ENCODE measurements at regions of chr1 and their contacts with region 1.

Region 1: GRCh38 chr1:77683160-77684148 is 996 bp upstream of the ZZZ3 start:
- DNase-seq: peak; percentile 92
- H3K4me3 Mint-ChIP-seq: peak overlapping the region; percentile 95
- H3K27ac Mint-ChIP-seq: peak overlapping the region; percentile 95
- H3K4me1 Mint-ChIP-seq: peaks cover 33% of the 10 kb centered on the region
- H3K27me3 Mint-ChIP-seq: no peaks in the 10 kb centered on the region

Region 2: DNA sequence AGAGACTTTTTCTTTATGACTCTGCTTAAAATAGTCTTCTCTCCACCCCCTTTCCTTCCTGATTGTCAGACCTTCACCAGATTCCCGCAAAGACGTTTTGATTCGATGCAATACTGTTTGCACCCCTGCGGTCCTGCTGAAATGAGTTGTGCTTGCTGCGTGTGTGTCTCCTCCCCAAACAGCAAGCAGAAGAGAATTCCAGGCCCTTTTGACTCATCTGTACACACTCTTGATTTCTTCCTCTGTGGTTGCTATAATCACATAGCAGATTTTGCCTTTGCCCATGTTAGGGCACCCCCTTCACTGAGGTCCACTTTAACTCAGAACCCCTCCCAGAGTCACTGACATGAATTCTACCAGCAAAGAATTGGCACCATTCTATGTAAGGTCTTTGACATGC is 137.5 kb before region 1 on chr1:
- CTCF ChIA-PET with region 1: no interaction called
- POLR2A ChIA-PET with region 1: no interaction called
- DNase-seq: no peak
- H3K4me3 Mint-ChIP-seq: no peak overlapping the region
- H3K27ac Mint-ChIP-seq: no peak overlapping the region
- H3K4me1 Mint-ChIP-seq: no peaks in the 10 kb centered on the region
- H3K27me3 Mint-ChIP-seq: no peaks in the 10 kb centered on the region

Region 3: GRCh38 chr1:77672374-77672773 is 11.1 kb before region 1 on chr1:
- CTCF ChIA-PET with region 1: interaction called, 11 read pairs
- POLR2A ChIA-PET with region 1: interaction called, 4 read pairs
- DNase-seq: no peak
- H3K4me3 Mint-ChIP-seq: no peak overlapping the region
- H3K27ac Mint-ChIP-seq: no peak overlapping the region
- H3K4me1 Mint-ChIP-seq: peaks cover 53% of the 10 kb centered on the region
- H3K27me3 Mint-ChIP-seq: no peaks in the 10 kb centered on the region

Region 4: DNA sequence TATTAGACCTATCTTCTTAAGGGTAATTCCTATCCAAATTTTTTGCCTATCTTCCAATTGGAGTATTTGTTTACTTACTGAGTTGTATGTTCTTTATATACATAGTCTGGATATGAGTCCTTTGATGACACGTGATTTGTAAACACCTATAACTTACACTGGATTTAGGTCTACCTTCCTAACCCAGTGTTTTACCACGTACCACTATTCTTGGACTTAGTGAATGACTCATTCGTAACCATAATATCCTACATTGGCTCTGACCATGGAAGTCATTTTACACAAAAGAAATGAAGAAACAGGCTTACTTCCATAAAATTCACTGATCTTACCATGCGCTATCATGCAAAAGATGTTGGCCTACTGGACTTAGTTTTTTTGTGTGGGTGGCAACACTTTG is 22.9 kb after region 1 on chr1:
- CTCF ChIA-PET with region 1: no interaction called
- POLR2A ChIA-PET with region 1: no interaction called
- DNase-seq: no peak
- H3K4me3 Mint-ChIP-seq: no peak overlapping the region
- H3K27ac Mint-ChIP-seq: no peak overlapping the region
- H3K4me1 Mint-ChIP-seq: peaks cover 2% of the 10 kb centered on the region
- H3K27me3 Mint-ChIP-seq: no peaks in the 10 kb centered on the region

Measured in activated CD4-positive, alpha-beta T cell treated with anti-CD3 and anti-CD28 coated beads, Interleukin-2, amount 10 ng/mL, durations not matched to agents 7 days and 5 days (primary cell).